ENCODE measurements at regions of chr22 and their contacts with region 1.

Region 1: DNA sequence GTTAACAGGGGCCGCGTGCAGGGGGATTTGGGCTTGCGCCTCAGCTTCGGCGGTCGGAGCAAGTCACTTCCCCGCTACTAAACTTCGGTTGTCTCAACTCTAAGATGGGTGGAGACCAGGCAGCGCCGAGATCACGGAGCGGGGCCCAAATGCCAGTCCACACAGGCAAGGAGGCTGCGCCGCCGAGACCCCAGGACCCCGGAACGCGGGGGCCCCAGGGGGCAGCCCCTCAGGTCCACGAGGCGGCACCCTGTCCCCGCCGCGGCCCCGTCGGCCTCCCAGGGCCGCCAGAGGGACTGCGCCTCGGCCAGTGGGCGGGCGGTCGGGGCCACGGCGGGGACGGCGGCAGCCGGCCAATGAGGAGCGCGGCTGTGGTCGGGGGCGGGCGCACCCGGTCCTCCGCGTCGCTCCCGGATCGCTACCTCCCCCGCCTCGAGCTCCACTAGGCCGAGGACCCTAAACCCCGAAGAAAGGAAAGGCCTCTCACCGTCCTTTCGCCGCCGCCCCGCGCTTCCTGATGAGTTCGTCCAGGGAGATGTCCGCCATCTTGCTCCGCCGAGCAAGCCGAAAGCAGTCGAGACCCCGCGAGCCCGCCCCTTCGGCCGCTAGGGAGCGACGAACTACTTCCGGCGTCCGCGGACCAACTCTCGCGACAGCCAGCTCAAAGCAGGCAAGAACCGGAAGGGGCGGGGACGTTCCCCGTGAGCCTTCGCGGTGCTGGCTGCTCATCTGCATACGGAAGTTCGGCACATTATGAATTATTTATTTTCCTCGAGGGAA is at the start of gene POLDIP3:
- DNase-seq: peak; percentile 93
- ATAC-seq: peak; percentile 79
- H3K4me3 ChIP-seq: peak within 1 kb of the TSS; percentile 75 to 90 (median 78)
- H3K27ac ChIP-seq: peak within 1 kb of the TSS; percentile 93
- H3K4me1 ChIP-seq: peaks cover 56% of the 10 kb centered on the region
- H3K27me3 ChIP-seq: no peaks in the 10 kb centered on the region; a peak in 1 of 5 replicates
- CTCF ChIP-seq: peak; percentile 75
- EP300 ChIP-seq: no peak
- POLR2A ChIP-seq: peak; percentile 51 to 61; a peak in 1 of 4 replicates
- RAD21 ChIP-seq: peak; percentile 40; the same call in 1 of the 2 replicates
- total RNA-seq, gene POLDIP3: 47.4 and 64.1 TPM in 2 replicates

Region 2: GRCh38 chr22:42353883-42354727 is 260.4 kb before region 1 on chr22:
- CTCF ChIA-PET with region 1: no interaction called
- POLR2A ChIA-PET with region 1: no interaction called
- in situ Hi-C with region 1: no loop called
- intact Hi-C with region 1: no loop called
- DNase-seq: no peak
- ATAC-seq: no peak
- H3K4me3 ChIP-seq: no peak overlapping the region
- H3K27ac ChIP-seq: no peak overlapping the region
- H3K4me1 ChIP-seq: no peaks in the 10 kb centered on the region
- H3K27me3 ChIP-seq: peaks cover 1 to 29% of the 10 kb centered on the region in 2 experiments; a peak in 4 of 5 replicates
- CTCF ChIP-seq: no peak
- EP300 ChIP-seq: no peak
- POLR2A ChIP-seq: no peak
- RAD21 ChIP-seq: no peak

Region 3: DNA sequence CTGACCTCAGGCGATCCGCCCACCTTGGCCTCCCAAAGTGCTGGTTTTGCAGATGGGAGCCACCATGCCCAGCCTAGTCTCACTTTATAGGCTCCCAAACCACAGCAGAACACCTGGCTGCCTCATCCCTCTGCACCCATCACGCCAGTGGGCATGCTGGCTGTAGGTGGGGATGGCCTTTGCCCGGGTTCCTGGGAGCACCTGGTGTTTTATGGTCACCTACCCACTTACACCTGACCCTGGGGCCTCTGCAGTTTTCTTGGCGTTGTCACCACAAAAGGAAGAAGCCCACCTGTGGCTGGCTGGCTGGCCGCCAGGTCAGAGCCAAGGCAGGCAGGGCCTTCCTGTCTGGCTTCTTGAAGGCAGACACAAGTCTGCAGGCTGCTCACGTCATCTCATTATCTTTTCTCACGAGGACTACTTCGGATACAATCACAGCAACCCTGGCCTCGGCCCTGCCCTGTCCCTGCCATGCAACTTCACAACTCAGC is 103.1 kb before region 1 on chr22:
- CTCF ChIA-PET with region 1: interaction called, 5 read pairs
- POLR2A ChIA-PET with region 1: no interaction called
- in situ Hi-C with region 1: no loop called
- intact Hi-C with region 1: loop called (anchors 10 kb)
- DNase-seq: no peak
- ATAC-seq: no peak
- H3K4me3 ChIP-seq: no peak overlapping the region
- H3K27ac ChIP-seq: no peak overlapping the region
- H3K4me1 ChIP-seq: peaks cover 11% of the 10 kb centered on the region
- H3K27me3 ChIP-seq: no peaks in the 10 kb centered on the region
- CTCF ChIP-seq: no peak
- EP300 ChIP-seq: no peak
- POLR2A ChIP-seq: no peak
- RAD21 ChIP-seq: no peak

Region 4: DNA sequence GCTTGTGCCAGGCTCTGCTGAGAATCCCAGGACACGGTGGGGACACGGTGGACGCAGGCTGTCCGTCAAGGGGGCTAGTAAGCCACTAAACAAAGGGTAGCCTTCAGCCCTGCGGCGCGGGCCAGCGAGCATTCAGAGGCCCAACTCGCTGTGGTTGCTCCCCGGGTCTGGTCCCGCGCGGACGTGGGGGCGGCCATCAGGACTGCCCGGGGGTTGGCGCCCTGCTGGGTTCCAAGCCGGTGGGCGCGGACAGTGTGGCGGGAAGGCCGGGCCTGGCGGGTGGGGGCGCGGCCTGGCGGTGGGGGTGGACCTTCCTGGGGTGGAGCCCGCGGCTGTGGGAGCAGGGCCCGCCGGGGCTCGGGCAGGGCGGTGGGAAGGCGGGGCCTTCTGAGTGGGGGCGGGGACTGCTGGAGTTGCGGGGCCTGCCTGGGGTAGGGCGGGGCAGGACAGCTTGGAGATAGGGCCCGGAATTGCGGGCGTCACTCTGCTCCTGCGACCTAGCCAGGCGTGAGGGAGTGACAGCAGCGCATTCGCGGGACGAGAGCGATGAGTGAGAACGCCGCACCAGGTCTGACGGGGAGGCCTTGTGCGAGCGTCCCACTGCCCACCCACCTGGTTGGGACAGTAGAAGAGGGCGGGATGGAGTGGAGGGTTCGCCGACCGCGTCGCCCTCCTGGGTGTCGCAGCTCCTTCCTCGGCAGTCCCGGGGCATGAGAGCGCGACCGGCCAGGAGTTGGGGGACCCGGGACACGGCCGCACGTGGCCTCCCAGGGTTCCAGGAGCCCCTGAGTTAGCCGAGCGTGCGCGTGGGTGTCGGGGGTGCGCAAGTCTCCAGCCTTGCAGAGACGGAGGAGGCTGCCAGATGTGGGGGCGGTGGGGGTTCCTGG is 60.8 kb before region 1 on chr22 and contains the start of gene SERHL2:
- CTCF ChIA-PET with region 1: no interaction called
- POLR2A ChIA-PET with region 1: interaction called, 4 read pairs
- in situ Hi-C with region 1: no loop called
- intact Hi-C with region 1: loop called (anchors 5 kb)
- DNase-seq: peak; percentile 68
- ATAC-seq: peak; percentile 91
- H3K4me3 ChIP-seq: peak within 1 kb of the TSS; percentile 59 to 79 (median 64)
- H3K27ac ChIP-seq: no peak within 1 kb of the TSS
- H3K4me1 ChIP-seq: peaks cover 34% of the 10 kb centered on the region
- H3K27me3 ChIP-seq: no peaks in the 10 kb centered on the region; a peak in 1 of 5 replicates
- CTCF ChIP-seq: peak; percentile 37; the same call in 1 of the 2 replicates
- EP300 ChIP-seq: no peak
- POLR2A ChIP-seq: peak in 1 of 2 experiments; percentile 55; a peak in 2 of 4 replicates
- RAD21 ChIP-seq: no peak
- total RNA-seq, gene SERHL2: 1.0 and 1.6 TPM in 2 replicates

Region 5: DNA sequence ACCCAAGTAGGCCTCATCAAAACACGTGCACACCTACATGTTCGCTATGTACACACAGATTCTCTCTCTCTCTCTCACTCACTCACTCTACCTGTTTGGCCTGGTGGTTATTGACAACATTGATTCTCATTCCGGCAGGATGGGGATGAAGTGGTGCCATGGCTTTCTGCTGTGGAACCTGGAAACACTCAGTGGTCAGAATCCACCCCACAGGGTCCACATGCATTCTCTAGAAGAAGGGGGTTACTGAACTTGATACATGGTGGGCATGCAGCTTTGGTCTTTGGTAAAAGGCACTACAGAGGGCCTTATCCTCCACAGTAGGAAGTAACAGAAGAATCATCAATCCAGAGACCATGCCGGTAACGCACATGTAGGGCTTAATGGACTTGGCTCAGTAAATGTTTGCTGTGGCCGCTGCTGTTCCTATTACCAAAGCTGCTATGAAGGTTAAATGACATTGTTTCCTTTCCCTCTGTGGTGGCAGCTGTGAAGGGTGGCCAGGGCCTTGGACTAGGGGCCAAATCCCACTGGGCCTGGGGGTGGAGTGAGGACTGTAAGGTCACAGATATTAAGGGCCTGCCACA is 12.5 kb before region 1 on chr22:
- CTCF ChIA-PET with region 1: no interaction called
- POLR2A ChIA-PET with region 1: interaction called, 12 read pairs
- in situ Hi-C with region 1: no loop called
- intact Hi-C with region 1: no loop called
- DNase-seq: peak; percentile 73
- ATAC-seq: peak; percentile 91
- H3K4me3 ChIP-seq: no peak overlapping the region; a peak in 1 of 6 replicates
- H3K27ac ChIP-seq: peak overlapping the region; percentile 93
- H3K4me1 ChIP-seq: peaks cover 63% of the 10 kb centered on the region
- H3K27me3 ChIP-seq: no peaks in the 10 kb centered on the region
- CTCF ChIP-seq: peak; percentile 9; the same call in 1 of the 2 replicates
- EP300 ChIP-seq: no peak
- POLR2A ChIP-seq: 0 out of 4 replicates have a peak, but pooled peaks of 1 of the 2 experiments have one; percentile 20
- RAD21 ChIP-seq: no peak; the same call in 1 of the 2 replicates

Region 6: DNA sequence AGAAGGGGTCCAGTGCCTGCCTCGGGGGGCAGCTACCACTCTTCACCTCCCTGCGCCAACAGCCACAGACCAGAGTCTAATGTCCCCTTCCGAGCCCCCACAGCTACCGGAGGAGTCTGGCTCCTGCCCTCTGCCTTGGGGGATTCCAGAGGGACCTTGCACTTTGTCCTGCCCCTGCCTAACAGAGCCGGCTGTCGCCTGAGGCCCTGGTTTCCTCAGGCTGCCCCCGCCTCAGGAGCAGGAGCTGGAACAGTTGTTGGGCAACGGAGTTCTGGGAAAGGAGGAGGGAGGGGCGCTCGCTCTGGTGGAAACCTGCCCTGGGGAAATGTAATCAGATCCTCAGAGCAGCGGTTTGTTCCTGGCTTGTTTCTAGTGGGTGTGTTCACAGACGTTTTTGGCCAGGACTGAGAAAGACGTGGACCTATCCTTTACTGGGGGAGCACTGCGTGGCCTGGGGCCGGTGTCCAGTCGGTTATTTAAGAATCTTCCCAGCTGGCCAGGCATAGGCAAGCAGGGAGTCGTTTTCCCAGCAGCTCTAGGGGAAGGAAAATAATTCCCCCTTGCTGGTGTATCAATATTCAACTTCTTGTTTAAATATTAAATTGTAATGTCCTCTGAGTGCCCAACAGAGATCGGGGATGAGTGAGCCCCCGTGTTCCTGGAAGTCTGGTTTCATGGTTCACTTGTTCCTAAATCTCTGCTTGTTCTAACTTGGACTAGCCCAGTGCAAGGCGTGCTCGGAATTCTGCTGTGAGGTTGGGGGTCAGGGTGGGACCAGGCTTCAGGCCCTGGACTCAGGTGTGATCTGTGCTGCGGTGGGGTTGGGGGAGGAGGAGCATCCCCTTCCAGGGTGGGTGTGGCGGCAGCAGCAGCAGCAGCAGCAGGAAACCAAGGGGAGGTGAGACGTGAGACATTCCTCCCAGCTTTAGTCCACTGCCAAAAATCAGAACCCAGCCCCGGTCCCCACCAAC is 74.0 kb after region 1 on chr22:
- CTCF ChIA-PET with region 1: no interaction called
- POLR2A ChIA-PET with region 1: interaction called, 16 read pairs
- in situ Hi-C with region 1: no loop called
- intact Hi-C with region 1: no loop called
- DNase-seq: peak; percentile 57
- ATAC-seq: peak; percentile 78
- H3K4me3 ChIP-seq: peak overlapping the region; percentile 32 to 60 (median 50)
- H3K27ac ChIP-seq: no peak overlapping the region
- H3K4me1 ChIP-seq: peaks cover 54% of the 10 kb centered on the region
- H3K27me3 ChIP-seq: no peaks in the 10 kb centered on the region; a peak in 1 of 5 replicates
- CTCF ChIP-seq: peak; percentile 26; the same call in 1 of the 2 replicates
- EP300 ChIP-seq: peak in 1 of 2 experiments; percentile 61; a peak in 1 of 4 replicates
- POLR2A ChIP-seq: no peak
- RAD21 ChIP-seq: no peak

Region 7: GRCh38 chr22:42747701-42748513 is 133.4 kb after region 1 on chr22:
- CTCF ChIA-PET with region 1: no interaction called
- POLR2A ChIA-PET with region 1: no interaction called
- in situ Hi-C with region 1: no loop called
- intact Hi-C with region 1: no loop called
- DNase-seq: peak; percentile 74
- ATAC-seq: peak; percentile 70
- H3K4me3 ChIP-seq: peak overlapping the region in 1 of 3 experiments; percentile 40; a peak in 2 of 6 replicates
- H3K27ac ChIP-seq: no peak overlapping the region
- H3K4me1 ChIP-seq: peaks cover 69% of the 10 kb centered on the region
- H3K27me3 ChIP-seq: no peaks in the 10 kb centered on the region
- CTCF ChIP-seq: no peak
- EP300 ChIP-seq: no peak
- POLR2A ChIP-seq: no peak
- RAD21 ChIP-seq: no peak